Breast epithelium (tissue), 4 donors: ENCODE measurements at regions of chr13 and their contacts with region 1.

Region 1: DNA sequence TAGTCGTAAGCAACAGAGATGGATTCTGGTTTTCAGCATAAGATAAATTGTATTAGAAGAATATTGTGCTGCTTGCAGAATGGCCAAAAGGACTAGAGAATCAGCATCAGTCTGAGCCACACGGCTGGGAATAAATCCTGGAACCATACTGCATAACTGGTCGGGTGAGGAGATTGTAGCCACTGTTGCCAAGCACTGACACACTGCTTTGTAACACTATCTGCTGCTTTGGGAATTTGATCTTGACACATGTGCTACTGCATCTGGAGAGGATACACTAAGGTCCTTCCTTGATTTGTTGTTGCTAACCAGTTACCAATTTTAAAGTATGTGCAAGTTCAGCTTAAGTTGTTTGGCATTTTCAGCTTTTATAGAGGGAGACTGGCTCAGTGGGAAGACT is 1.9 kb downstream of the HNRNPA1L2 start:
- DNase-seq: no peak
- H3K4me3 ChIP-seq: no peak overlapping the region
- H3K27ac ChIP-seq: no peak overlapping the region
- H3K4me1 ChIP-seq: no peaks in the 10 kb centered on the region
- H3K27me3 ChIP-seq: no peaks in the 10 kb centered on the region
- CTCF ChIP-seq: no peak
- POLR2A ChIP-seq: no peak

Region 2: GRCh38 chr13:52393572-52394357 is 250.3 kb before region 1 on chr13:
- intact Hi-C with region 1: loop called (anchors 5 kb)
- DNase-seq: no peak
- H3K4me3 ChIP-seq: no peak overlapping the region
- H3K27ac ChIP-seq: no peak overlapping the region
- H3K4me1 ChIP-seq: no peaks in the 10 kb centered on the region
- H3K27me3 ChIP-seq: no peaks in the 10 kb centered on the region
- CTCF ChIP-seq: no peak
- POLR2A ChIP-seq: no peak